ENCODE measurements at regions of chr1 and their contacts with region 1.

Region 1: GRCh38 chr1:89483010-89483756 is 41.4 kb upstream of the LRRC8B start:
- DNase-seq: peak; percentile 76
- H3K4me3 ChIP-seq: no peak overlapping the region
- CTCF ChIP-seq: peak; percentile 73

Region 2: GRCh38 chr1:89391686-89392085 is 91.5 kb before region 1 on chr1:
- in situ Hi-C with region 1: no loop called
- DNase-seq: no peak
- H3K4me3 ChIP-seq: no peak overlapping the region
- CTCF ChIP-seq: no peak

Region 3: DNA sequence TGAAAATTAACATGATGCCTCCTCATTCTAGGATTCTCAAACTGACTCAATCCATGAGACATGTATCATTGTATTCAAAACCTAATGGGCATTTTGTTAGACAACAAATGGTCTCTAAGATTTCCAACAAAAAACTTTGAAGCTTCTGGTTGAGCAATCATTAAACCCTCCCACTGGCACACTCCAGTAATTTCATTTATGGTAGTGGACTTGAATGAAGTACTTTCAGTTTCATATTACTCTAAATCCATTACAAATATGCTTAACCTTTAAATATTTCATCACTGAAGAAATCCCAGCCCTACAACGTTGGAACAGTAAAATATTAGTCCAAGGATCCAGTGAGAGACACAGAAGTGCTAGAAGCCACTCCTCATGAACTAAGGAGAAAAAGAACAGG is 75.8 kb before region 1 on chr1:
- in situ Hi-C with region 1: no loop called
- DNase-seq: no peak
- H3K4me3 ChIP-seq: no peak overlapping the region
- CTCF ChIP-seq: no peak

Region 4: GRCh38 chr1:89757532-89757931 is 274.3 kb after region 1 on chr1:
- in situ Hi-C with region 1: loop called (anchors 5 kb)
- DNase-seq: no peak
- H3K4me3 ChIP-seq: no peak overlapping the region
- CTCF ChIP-seq: no peak

Measured in astrocyte of the cerebellum (primary cell).